Activated T-helper 2 cell treated with anti-CD3 and anti-CD28 coated beads, Interferon-gamma antibody, Interleukin-2, Interleukin-4, amounts not matched to agents 10 μg/mL and 5 μg/mL and 100 μg/mL, durations not matched to agents 14 hours and 24 hours and 36 hours (primary cell): ENCODE measurements at regions of chr17 and their contacts with region 1.

Region 1: DNA sequence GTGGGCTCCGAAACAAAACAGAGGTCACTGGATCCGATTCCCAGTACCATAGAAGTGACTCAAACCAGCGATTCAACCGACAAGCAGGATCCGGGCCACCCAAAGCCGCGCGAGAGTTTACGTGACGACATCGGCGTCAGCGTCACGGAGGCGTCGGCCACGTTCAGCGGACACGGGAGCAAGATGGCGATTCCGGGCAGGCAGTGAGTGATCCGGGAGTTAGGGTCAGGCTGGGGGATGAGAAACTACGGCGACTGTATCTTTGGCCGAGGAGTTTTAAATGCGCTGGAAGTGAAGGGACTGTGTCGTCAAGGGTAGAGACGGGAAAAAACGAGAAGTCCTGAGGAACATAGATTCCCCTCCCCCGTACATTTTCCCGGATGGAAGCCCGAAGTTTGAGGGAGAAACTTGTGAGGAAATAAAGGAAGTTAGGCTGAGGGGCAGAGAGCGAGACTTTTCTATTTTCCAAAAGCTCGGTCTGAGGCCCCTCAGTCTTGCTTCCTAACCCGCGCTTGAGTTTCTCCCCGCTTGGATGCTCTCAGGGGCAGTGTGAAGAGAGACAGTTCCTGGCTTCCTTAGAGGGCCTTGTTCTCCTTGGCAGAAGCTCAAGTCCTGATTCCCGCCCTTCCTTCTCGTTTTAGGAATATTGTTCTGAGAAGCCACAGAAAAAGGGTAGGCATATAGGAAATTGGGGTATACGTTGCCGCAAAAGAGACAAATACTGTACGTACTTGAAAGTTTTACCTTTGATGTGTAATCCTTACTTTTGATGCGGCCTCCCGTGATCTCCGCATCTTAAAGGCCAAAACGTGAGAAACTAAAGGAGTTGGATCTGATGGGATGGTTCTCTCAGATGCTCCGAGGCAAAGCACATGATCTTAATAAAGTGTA is at the start of gene NSRP1:
- DNase-seq: peak; percentile 91
- H3K4me3 Mint-ChIP-seq: peak within 1 kb of the TSS; percentile 96
- H3K27ac Mint-ChIP-seq: peak within 1 kb of the TSS; percentile 98
- H3K4me1 Mint-ChIP-seq: peaks cover 59% of the 10 kb centered on the region
- H3K27me3 Mint-ChIP-seq: peaks cover under 1% of the 10 kb centered on the region
- total RNA-seq, gene NSRP1: 27.3 and 27.4 TPM in 2 replicates

Region 2: DNA sequence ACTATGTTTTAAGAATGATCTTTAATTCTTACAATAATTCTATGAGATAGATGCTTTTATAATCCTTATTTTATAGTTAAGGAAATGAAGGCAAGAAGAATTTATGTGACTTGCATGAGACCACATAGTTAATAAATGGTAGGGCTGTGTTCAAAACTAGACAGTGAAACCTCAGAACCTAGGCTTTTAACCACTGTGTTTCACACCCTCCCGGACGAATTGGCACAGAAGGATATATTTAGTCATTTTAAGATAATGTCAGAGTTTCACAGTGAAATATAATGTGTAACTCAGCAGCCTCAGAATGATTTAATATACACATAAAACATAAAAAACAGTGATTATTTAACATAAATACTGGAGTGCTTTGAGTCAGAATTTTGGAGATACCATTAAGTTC is 56.7 kb after region 1 on chr17:
- intact Hi-C with region 1: loop called (anchors 5 kb)
- DNase-seq: no peak
- H3K4me3 Mint-ChIP-seq: no peak overlapping the region
- H3K27ac Mint-ChIP-seq: no peak overlapping the region
- H3K4me1 Mint-ChIP-seq: peaks cover 23% of the 10 kb centered on the region
- H3K27me3 Mint-ChIP-seq: no peaks in the 10 kb centered on the region

Region 3: GRCh38 chr17:30291543-30292285 is 174.8 kb after region 1 on chr17 and contains the start of gene BLMH:
- intact Hi-C with region 1: loop called (anchors 5 kb)
- DNase-seq: peak; percentile 79
- H3K4me3 Mint-ChIP-seq: peak within 1 kb of the TSS; percentile 90
- H3K27ac Mint-ChIP-seq: peak within 1 kb of the TSS; percentile 88
- H3K4me1 Mint-ChIP-seq: peaks cover 13% of the 10 kb centered on the region
- H3K27me3 Mint-ChIP-seq: no peaks in the 10 kb centered on the region
- total RNA-seq, gene BLMH: 68.9 and 72.2 TPM in 2 replicates